GM10248 (cell line): ENCODE measurements at regions of chr9 and their contacts with region 1.

Region 1: GRCh38 chr9:3473405-3473804 is 52.4 kb downstream of the RFX3 start:
- DNase-seq: no peak
- CTCF ChIP-seq: no peak

Region 2: DNA sequence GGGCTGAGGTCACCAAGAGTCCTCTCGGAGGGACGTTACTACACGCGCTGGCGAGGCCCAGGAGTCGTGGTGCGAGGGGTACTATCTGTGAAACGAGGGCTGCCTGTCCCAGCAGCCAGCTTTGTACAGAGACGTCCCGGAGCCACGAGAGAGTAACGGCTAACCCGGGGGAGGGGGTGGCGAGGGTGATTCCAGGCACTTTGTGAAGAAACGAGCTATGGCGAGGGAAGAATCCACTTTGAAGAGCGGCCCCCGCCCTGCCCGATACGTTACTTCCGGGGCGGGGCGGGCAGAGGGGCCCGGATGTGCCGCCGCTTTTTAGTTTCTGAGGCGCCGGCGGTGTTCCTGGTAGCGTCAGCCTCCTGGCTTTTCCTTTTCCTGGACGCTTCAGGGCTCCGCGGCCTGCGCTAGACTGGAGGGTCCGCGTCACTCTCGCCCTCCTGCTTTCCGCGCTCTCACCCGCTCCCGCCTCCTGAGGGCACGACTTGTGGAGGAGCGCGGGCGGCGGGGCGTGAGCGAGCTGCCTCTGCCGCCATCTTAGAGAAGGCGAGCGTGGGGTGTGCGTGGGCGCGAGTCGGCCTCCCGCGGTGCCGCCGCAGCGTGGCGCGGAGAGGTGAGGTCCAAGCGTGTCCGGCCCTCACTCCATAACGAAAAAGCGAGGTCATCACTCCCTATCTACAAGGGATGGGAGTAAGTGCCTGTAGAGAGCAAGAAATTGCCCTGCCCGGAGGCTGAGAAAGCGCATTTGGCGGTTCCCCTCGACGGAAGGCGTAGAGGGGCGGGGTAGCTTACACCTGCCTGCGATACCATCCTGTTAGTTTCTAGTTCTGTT is 53.0 kb after region 1 on chr9:
- CTCF ChIA-PET with region 1: interaction called, 5 read pairs
- POLR2A ChIA-PET with region 1: interaction called, 10 read pairs
- DNase-seq: peak; percentile 79
- CTCF ChIP-seq: no peak